Motor neuron (in vitro differentiated cells): ENCODE measurements at regions of chr20 and their contacts with region 1.

Region 1: GRCh38 chr20:24584538-24585356 is 115.3 kb downstream of the SYNDIG1 start:
- ATAC-seq: peak in 4 of 8 experiments; percentile 64 to 75 (median 66)
- H3K4me3 ChIP-seq: no peak overlapping the region
- H3K27ac ChIP-seq: no peak overlapping the region
- H3K4me1 ChIP-seq: peaks cover 0 to 2% of the 10 kb centered on the region in 2 donors

Region 2: DNA sequence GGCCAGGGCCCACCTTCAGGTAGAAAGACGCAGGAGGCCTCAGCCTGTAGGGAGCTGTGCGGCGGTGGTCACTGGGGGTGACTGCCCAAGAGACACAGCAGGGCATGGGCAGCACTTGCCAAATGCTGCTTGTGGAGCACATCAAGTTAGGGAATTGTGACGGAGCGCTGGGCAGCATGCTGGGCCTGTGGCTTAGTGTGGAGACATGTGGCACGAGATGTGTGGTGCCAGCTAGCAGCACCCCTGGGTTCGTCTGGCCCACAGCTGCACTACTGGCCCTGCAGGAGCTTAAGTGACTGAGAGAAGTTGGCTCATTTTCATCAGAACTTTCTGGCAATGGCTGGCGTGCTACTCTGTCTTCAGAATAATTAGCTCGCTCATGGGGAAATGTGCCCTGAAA is 328.4 kb before region 1 on chr20:
- in situ Hi-C with region 1: no loop called
- ATAC-seq: no peak
- H3K4me3 ChIP-seq: no peak overlapping the region
- H3K27ac ChIP-seq: no peak overlapping the region
- H3K4me1 ChIP-seq: peaks cover 0 to 5% of the 10 kb centered on the region in 2 donors

Region 3: DNA sequence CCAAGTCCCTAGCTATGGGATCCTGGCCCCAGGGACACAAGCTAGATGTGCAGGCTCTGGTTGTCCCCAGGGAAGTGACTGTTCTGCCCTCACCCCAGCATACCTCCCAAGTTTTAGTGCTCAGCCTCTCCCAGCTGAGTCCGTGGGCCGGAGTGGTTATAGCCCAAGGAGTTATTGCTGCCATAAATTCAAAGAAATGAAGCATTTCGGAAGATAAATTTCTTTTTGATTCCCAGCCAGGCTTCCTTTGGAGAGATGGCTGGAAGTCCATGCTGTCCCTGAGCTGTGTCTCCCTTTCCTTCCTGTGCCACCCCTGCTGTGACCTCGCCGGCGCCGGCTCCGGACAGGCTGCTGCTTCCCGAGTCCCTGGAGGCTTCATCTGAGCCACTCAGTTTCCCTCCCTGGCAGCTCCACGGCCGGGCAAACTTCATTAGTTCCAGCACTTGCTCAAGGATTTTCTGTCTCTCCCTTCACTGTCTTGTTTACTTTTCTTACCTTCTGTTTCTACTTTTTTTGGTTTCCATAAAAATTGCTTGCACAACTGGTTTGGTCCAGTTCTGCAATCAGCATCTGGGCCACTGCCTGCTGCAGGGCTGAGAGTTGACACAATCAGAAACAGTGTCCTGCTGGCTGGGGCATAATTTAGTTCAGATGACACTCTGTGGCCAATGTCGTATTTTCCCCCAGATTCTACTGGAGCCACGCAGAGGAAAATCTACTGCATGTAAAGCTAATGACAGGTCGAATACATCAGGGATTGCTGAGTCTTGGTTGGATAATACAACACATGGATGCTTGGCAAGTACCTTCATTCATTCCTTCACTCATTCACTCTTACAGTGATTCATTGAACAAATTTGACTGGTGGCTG is 110.2 kb after region 1 on chr20:
- in situ Hi-C with region 1: loop called in 1 of 9 experiments (anchors 25 kb)
- ATAC-seq: peak in 7 of 8 experiments; percentile 38 to 91 (median 69)
- H3K4me3 ChIP-seq: no peak overlapping the region
- H3K27ac ChIP-seq: no peak overlapping the region
- H3K4me1 ChIP-seq: peaks cover 6 to 10% of the 10 kb centered on the region in 2 donors

Region 4: DNA sequence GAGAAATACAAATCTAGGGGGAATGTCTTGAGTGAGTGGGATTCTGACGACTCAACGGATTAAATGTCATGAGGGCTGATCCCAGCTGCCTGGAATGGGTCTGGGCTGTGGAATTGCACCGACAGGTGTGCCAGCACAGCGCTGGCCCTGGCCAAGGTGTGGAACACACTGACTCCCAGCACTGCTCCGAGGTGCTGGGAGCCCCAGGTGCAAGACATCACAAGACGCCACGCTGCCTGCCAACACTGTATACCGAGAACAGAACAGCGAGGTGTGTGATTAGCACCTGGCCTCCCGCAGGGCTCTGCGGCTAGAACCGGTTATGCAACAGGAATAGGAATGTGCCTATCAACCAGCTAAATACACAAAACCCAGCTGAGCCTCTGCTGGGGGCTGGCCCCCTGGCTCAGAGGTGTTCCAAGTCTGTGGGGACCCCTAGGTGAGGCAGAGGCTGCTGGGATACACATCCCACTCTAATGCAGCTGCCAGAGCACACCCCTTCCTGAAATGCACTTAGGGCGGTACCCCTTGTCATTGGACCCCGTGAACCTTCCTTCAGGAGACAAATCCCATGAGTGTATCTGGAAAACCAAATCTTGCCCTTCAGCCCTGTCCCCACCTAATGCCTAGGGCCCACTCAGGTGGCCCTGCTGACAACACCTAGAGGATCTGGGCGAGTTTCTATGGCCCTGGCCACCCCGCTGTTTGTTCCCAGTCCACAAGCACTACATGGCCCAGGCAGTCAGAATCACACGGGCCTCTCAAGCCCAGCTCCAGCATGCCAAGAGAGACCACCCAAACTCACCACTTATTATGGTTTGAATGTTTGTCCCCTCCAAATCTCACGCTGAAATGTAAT is 432.7 kb after region 1 on chr20:
- in situ Hi-C with region 1: no loop called
- ATAC-seq: no peak
- H3K4me3 ChIP-seq: no peak overlapping the region
- H3K27ac ChIP-seq: no peak overlapping the region
- H3K4me1 ChIP-seq: no peaks in the 10 kb centered on the region